Activated CD8-positive, alpha-beta T cell treated with anti-CD3 and anti-CD28 coated beads for 36 hours (primary cell): ENCODE measurements at regions of chr3 and their contacts with region 1.

Region 1: GRCh38 chr3:48301020-48301796 is 32.3 kb downstream of the SPINK8 start:
- DNase-seq: peak; percentile 96
- ATAC-seq: peak; percentile 92
- H3K4me3 Mint-ChIP-seq: peak within 1 kb of the TSS; percentile 86
- H3K27ac Mint-ChIP-seq: peak within 1 kb of the TSS; percentile 89
- H3K4me1 Mint-ChIP-seq: peaks cover 37% of the 10 kb centered on the region
- H3K27me3 Mint-ChIP-seq: no peaks in the 10 kb centered on the region
- CTCF ChIP-seq: no peak

Region 2: GRCh38 chr3:48047841-48048456 is 253.3 kb before region 1 on chr3:
- CTCF ChIA-PET with region 1: no interaction called
- POLR2A ChIA-PET with region 1: no interaction called
- intact Hi-C with region 1: no loop called
- DNase-seq: no peak
- ATAC-seq: no peak
- H3K4me3 Mint-ChIP-seq: no peak overlapping the region
- H3K27ac Mint-ChIP-seq: no peak overlapping the region
- H3K4me1 Mint-ChIP-seq: peaks cover 8% of the 10 kb centered on the region
- H3K27me3 Mint-ChIP-seq: no peaks in the 10 kb centered on the region
- CTCF ChIP-seq: no peak

Region 3: GRCh38 chr3:48273594-48274211 is 27.5 kb before region 1 on chr3:
- CTCF ChIA-PET with region 1: interaction called, 11 read pairs
- POLR2A ChIA-PET with region 1: interaction called, 7 read pairs
- intact Hi-C with region 1: no loop called
- DNase-seq: peak; percentile 67
- ATAC-seq: peak; percentile 24
- H3K4me3 Mint-ChIP-seq: no peak overlapping the region
- H3K27ac Mint-ChIP-seq: no peak overlapping the region
- H3K4me1 Mint-ChIP-seq: peaks cover 23% of the 10 kb centered on the region
- H3K27me3 Mint-ChIP-seq: no peaks in the 10 kb centered on the region
- CTCF ChIP-seq: peak; percentile 79